ENCODE measurements at regions of chrX and their contacts with region 1.

Region 1: DNA sequence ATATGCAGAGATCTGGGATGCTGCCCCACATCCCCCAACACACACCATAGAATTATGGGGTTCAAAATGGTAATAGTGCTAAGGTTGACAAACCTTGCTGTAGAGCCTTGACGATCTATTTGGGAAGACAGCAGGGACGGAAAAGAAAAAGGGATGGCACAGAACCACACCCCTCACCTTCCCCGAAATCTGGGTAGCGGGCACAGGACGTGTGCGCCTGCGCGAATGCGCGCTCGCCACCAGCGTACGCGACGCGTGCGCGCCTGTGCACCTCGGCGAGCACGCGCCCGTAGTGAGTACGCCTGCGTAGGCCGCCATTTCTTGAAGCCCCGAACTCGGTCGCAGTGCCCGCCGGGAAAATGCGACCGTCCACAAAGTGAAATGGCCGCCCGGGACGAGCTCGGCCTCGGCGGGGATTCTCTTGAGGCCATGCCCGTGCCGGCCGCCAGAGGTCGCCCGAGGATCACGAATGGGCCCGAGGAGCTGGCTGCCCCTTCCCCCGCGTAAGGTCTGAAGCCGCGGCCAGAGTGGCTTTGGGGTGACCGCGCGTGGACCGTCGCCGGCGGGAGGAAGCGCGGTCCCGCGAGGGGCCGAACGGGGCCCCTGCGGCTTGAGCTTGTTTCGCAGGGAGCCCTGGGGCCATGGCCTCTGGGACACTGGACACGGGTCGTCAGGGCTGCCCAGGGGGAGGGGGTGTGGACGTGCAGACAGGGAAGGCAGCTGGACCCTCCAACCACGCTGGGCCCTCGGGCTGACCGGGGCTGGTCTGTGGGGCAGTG is 43.6 kb downstream of the ZNF185 start:
- H3K4me3 Mint-ChIP-seq: peak overlapping the region; percentile 82
- H3K27ac Mint-ChIP-seq: peak overlapping the region; percentile 77
- H3K4me1 Mint-ChIP-seq: peaks cover 7% of the 10 kb centered on the region
- H3K27me3 Mint-ChIP-seq: no peaks in the 10 kb centered on the region

Region 2: DNA sequence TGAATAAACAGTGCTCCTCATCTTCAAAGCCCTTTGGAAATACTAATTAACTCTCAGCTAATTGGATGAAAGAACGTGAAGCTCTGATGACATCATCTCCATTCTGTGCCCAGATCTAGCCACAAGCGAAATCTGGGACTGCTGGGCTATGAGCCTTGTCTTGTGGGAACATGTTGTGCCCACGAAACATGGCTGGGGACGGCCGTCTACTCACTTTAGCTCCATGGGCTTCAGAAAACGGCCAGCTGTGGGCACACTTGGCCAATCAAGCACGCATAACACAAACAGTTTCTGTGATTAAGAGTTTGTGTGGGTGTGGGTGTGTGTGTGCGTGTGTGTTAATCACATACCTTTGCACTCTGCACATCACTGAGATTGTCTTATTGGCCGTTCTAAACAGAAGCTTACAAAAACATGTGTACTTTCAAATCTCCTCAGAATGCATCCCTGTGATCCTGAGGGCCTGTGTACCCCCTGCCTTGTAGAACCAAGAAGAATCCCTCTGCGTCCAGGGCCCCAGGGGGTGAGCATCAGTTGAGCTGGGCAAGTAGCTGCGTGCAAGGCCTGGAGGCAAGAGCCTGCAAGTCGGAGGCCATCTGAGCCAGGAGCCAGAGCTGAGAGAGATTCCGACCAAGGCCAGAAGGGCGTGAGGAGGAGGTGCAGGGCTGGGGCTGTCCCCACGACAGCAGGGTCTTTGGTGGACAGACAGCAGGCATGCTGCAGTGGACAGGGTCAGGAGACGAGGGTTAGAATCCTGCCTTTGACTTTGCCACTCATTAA is 62.4 kb before region 1 on chrX:
- intact Hi-C with region 1: no loop called
- H3K4me3 Mint-ChIP-seq: no peak overlapping the region
- H3K27ac Mint-ChIP-seq: no peak overlapping the region
- H3K4me1 Mint-ChIP-seq: no peaks in the 10 kb centered on the region
- H3K27me3 Mint-ChIP-seq: no peaks in the 10 kb centered on the region

Region 3: DNA sequence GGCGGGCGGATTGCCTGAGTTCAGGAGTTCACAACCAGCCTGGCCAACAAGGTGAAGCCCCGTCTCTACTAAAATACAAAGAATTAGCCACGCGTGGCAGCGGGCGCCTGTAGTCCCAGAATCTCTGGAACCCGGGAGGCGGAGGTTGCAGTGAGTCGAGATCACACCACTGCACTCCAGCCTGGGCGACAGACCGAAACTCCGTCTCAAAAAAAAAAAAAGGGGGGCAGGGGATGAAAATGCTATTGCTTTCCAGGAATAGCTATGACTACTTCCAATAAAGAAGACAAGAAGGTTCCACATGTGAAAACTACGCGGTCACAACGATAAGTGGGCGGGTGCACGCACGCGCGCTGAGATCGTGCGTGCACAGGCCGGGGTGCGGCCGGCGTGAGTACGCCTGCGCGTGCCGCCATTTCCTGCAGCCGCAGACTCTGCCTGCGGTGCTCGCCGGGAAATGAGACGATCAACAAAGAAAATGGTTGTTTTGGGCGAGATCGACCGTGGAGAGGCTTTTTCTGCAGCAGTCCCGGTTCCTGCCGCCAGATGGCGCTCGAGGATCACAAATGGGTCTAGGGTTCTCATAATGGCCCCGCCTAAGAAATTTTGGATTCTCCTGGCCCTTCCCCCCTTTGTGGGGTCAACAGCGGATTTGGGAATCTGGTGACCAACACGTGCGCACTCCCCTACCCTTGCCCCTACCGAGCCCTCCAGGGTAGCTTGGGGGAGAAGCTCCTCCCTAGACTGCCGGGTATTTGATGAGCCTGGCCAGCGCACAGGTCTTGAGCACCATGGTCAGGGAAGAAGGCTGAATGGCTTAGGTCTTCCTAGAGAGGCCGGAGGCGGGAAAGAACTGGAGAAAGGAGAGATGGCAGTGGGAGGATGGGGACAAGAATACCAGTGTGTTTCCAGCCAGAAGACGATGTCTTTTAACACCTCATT is 17.3 kb after region 1 on chrX:
- intact Hi-C with region 1: loop called (anchors 1 kb)
- H3K4me3 Mint-ChIP-seq: peak overlapping the region; percentile 58
- H3K27ac Mint-ChIP-seq: peak overlapping the region; percentile 87
- H3K4me1 Mint-ChIP-seq: peaks cover 11% of the 10 kb centered on the region
- H3K27me3 Mint-ChIP-seq: no peaks in the 10 kb centered on the region

Region 4: DNA sequence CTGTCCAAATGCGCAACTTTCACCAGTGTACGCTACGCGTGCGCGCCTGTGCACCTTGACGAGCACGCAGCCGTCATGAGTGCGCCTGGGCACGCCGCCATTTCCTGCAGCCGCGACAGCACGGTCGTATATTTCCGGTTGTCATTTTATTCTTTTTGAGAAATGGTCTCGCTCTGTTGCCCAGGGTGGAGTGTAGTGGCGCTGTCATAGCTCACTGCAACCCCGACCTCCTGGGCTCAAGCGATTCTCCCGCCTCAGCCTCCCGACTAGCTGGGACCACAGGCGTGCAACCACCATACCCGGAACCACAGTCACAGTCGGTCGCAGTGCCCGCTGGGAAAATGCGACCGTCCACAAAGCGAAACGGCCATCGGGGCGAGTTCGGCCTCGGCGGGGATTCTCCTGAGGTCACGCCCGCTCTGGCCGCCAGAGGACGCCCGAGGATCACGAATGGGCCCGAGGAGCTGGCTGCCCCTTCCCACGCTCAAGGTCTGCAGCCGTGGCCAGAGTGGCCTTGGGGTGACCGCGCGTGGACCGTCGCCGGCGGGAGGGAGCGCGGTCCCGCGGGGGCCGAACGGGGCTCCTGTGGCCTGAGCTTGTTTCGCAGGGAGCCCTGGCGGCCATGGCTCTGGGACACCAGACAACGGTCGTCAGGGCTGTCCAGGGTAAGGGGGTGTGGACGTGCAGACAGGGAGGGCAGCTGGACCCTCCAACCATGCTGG is 91.0 kb after region 1 on chrX:
- intact Hi-C with region 1: loop called (anchors 5 kb)
- H3K4me3 Mint-ChIP-seq: peak overlapping the region; percentile 76
- H3K27ac Mint-ChIP-seq: peak overlapping the region; percentile 91
- H3K4me1 Mint-ChIP-seq: no peaks in the 10 kb centered on the region
- H3K27me3 Mint-ChIP-seq: peaks cover 7% of the 10 kb centered on the region

Region 5: DNA sequence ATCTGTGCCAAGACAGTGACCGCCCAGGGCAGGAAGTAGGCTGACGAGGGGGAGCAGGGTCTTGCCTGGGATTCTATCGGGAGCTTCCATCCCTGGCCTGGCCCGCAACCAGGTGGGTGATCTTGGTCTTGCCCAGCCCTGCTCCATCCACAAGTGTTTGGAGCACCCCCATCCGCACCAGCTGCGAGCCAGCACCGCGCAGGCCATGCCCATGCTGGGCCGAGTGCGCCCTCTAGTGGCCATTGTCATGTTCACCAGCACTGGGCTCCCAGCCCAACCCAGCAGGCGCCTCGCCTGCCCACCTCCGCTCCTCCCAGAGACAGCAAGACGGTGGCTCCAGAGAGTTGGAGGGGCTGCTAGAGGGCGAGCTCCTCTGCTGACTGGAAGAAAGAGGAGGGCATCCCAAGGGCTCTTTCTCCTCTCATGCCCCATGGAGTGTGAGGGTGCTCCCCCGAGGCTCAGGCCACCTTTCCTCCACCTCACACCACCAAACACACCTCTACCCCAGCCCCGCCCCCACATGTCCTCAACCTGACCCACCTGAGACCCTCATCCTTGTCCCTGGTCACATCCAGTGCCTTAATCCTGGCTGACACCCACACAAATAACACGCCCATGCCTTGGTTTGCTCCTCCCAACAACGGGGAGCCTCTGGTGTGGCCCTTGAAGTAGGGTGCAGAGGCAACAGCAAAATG is 566.1 kb after region 1 on chrX:
- intact Hi-C with region 1: loop called (anchors 10 kb)
- H3K4me3 Mint-ChIP-seq: no peak overlapping the region
- H3K27ac Mint-ChIP-seq: no peak overlapping the region
- H3K4me1 Mint-ChIP-seq: peaks cover 6% of the 10 kb centered on the region
- H3K27me3 Mint-ChIP-seq: peaks cover 2% of the 10 kb centered on the region